Adrenal gland (tissue), 19 donors: ENCODE measurements at regions of chr1 and their contacts with region 1.

Region 1: DNA sequence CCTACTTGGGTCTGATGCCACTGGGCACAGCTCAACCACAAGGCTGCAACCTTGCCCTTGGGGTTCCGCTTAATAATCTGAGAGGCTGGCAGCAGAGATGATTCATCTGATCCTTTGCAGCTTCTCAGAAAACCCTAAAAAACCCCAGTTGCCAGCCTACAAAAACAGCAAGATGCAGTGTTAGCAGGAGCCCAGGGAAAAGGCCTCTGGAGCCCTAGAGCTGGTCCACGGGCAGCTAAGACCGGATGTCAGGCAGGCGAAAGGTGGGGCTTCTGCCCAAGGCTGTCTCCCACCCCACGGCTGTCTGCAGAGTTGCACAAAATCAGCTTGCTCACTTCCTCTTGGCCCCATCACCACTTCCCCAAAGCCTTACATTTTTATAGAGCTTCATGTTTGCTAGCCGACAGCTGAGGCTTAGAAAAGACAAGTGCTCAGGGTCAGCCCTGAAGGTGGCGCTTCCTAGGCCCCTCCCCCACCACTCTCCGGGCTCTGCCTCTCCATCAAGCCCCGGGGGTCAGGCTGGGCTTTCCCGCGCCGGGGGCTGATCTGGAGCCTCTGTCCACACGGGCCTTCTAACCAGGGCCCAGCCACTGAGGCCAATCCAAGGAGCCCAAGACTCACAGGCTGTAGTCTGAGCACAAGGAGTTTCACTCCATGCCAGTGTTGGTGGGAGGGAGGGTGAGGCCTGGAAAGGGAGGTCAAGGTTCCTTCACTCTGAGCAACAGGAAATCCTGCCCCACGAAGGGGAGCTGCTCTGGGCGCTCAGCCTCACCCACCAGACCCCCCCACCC is 4.2 kb upstream of the ADORA3 start:
- DNase-seq: peak; percentile 74 to 87 (median 82)
- H3K4me3 ChIP-seq: peak overlapping the region in 1 of 4 donors; percentile 42
- H3K27ac ChIP-seq: peak overlapping the region; percentile 71 to 99 (median 96)
- H3K4me1 ChIP-seq: peaks cover 29 to 42% of the 10 kb centered on the region in 2 donors
- H3K27me3 ChIP-seq: no peaks in the 10 kb centered on the region
- CTCF ChIP-seq: no peak
- POLR2A ChIP-seq: peak in 1 of 2 donors; percentile 18

Region 2: GRCh38 chr1:111656086-111657017 is 148.7 kb after region 1 on chr1:
- intact Hi-C with region 1: loop called (anchors 5 to 10 kb)
- DNase-seq: peak; percentile 25 to 64 (median 45)
- H3K4me3 ChIP-seq: no peak overlapping the region
- H3K27ac ChIP-seq: peak overlapping the region in 3 of 5 donors; percentile 38 to 42 (median 41)
- H3K4me1 ChIP-seq: peaks cover 21 to 50% of the 10 kb centered on the region in 2 donors
- H3K27me3 ChIP-seq: no peaks in the 10 kb centered on the region
- CTCF ChIP-seq: peak; percentile 41 to 85 (median 72)
- POLR2A ChIP-seq: no peak

Region 3: GRCh38 chr1:111720977-111721786 is 213.6 kb after region 1 on chr1:
- intact Hi-C with region 1: no loop called
- DNase-seq: peak in 1 of 7 donors; percentile 14
- H3K4me3 ChIP-seq: no peak overlapping the region
- H3K27ac ChIP-seq: peak overlapping the region in 1 of 5 donors; percentile 61
- H3K4me1 ChIP-seq: no peaks in the 10 kb centered on the region
- H3K27me3 ChIP-seq: no peaks in the 10 kb centered on the region
- CTCF ChIP-seq: no peak
- POLR2A ChIP-seq: no peak

Region 4: GRCh38 chr1:111755331-111756123 is 247.9 kb after region 1 on chr1 and contains the start of gene DDX20:
- intact Hi-C with region 1: loop called in 1 of 2 experiments (anchors 10 kb)
- DNase-seq: peak; percentile 92 to 96 (median 94)
- H3K4me3 ChIP-seq: peak within 1 kb of the TSS; percentile 32 to 93 (median 70)
- H3K27ac ChIP-seq: peak within 1 kb of the TSS; percentile 78 to 94 (median 85)
- H3K4me1 ChIP-seq: peaks cover 6 to 18% of the 10 kb centered on the region in 2 donors
- H3K27me3 ChIP-seq: no peaks in the 10 kb centered on the region
- CTCF ChIP-seq: peak; percentile 47 to 90 (median 84)
- POLR2A ChIP-seq: peak; percentile 62 to 70
- total RNA-seq, gene DDX20: 7.3 to 19.9 (median 12.0) TPM

Region 5: DNA sequence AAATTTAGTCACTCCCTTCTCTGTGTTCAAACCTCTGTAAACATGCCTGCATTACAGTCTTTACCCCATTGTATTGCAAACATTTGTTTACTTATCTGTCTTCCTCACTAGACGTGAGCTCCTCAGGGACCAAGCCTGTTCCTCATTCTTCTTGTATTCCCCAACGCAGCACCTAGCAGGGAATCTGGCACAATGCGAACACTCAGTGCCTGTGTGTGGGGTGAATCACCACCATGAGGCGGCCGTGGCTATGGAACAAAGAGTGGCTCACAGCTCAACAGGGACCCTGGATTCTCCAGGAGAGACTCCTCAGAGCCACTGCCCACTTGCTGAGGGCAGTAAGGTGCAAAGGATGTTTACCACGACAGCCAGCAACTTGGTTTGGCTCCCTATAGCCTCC is 343.9 kb after region 1 on chr1:
- intact Hi-C with region 1: no loop called
- DNase-seq: no peak
- H3K4me3 ChIP-seq: no peak overlapping the region
- H3K27ac ChIP-seq: no peak overlapping the region
- H3K4me1 ChIP-seq: no peaks in the 10 kb centered on the region
- H3K27me3 ChIP-seq: no peaks in the 10 kb centered on the region
- CTCF ChIP-seq: no peak
- POLR2A ChIP-seq: no peak